Naive thymus-derived CD4-positive, alpha-beta T cell (primary cell): ENCODE measurements at regions of chr2 and their contacts with region 1.

Region 1: GRCh38 chr2:195649629-195650190 is 7.3 kb upstream of the SLC39A10 start:
- DNase-seq: no peak
- ATAC-seq: no peak
- H3K4me3 ChIP-seq: no peak overlapping the region
- H3K4me3 Mint-ChIP-seq: peak overlapping the region in 4 of 10 donors; percentile 8 to 56 (median 27)
- H3K27ac ChIP-seq: no peak overlapping the region
- H3K27ac Mint-ChIP-seq: peak overlapping the region in 5 of 9 donors; percentile 10 to 90 (median 53)
- H3K4me1 ChIP-seq: no peaks in the 10 kb centered on the region
- H3K4me1 Mint-ChIP-seq: peaks cover 13 to 35% (median 18%) of the 10 kb centered on the region in 7 donors
- H3K27me3 ChIP-seq: no peaks in the 10 kb centered on the region
- H3K27me3 Mint-ChIP-seq: no peaks in the 10 kb centered on the region

Region 2: DNA sequence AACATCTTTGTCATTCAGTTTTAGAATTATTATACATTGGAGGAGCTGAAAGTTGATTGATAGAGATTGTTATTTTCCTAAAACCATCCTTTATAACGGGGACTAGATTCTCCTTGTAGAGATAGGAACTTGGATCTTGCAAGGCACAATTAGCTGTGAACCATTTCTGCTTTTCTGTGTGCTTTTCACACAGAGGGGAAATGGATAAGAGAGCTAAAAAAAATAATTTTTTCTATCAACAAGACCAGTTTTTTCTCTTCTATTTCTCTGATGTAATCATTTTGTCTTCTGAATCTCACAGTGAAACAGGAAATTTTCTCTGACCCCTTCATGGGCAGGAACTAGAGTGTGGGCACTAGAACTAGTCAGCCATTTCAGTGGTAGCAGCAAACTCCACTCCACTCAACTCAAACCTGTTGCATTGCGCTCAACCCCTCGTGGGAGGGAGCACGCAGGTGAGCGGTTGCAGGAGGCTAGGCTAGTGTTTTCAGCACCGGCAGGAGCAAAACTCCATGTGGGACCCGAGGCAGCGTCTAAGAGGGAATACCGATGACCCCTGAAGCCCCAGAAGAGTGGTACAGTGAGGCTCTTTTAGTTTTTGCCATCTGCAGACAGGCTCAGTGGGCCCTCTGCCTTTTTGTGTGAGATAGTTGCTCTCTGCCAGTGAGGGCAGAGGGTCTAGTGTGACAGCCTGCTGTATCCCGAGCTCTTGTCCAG is 16.7 kb before region 1 on chr2:
- CTCF ChIA-PET with region 1: no interaction called
- POLR2A ChIA-PET with region 1: interaction called, 4 read pairs
- intact Hi-C with region 1: loop called in 1 of 2 experiments (anchors 2 kb)
- DNase-seq: no peak
- ATAC-seq: no peak
- H3K4me3 ChIP-seq: no peak overlapping the region
- H3K4me3 Mint-ChIP-seq: peak overlapping the region in 3 of 10 donors; percentile 19 to 50 (median 40)
- H3K27ac ChIP-seq: no peak overlapping the region
- H3K27ac Mint-ChIP-seq: peak overlapping the region in 3 of 9 donors; percentile 36 to 81 (median 48)
- H3K4me1 ChIP-seq: no peaks in the 10 kb centered on the region
- H3K4me1 Mint-ChIP-seq: peaks cover 1 to 28% (median 17%) of the 10 kb centered on the region in 7 donors
- H3K27me3 ChIP-seq: no peaks in the 10 kb centered on the region
- H3K27me3 Mint-ChIP-seq: no peaks in the 10 kb centered on the region

Region 3: GRCh38 chr2:195672668-195673067 is 23.0 kb after region 1 on chr2:
- CTCF ChIA-PET with region 1: no interaction called
- POLR2A ChIA-PET with region 1: no interaction called
- intact Hi-C with region 1: no loop called
- DNase-seq: no peak
- ATAC-seq: no peak
- H3K4me3 ChIP-seq: no peak overlapping the region
- H3K4me3 Mint-ChIP-seq: no peak overlapping the region
- H3K27ac ChIP-seq: no peak overlapping the region
- H3K27ac Mint-ChIP-seq: no peak overlapping the region
- H3K4me1 ChIP-seq: peaks cover 0 to 12% of the 10 kb centered on the region in 2 donors
- H3K4me1 Mint-ChIP-seq: peaks cover 12 to 79% (median 56%) of the 10 kb centered on the region in 7 donors
- H3K27me3 ChIP-seq: no peaks in the 10 kb centered on the region
- H3K27me3 Mint-ChIP-seq: no peaks in the 10 kb centered on the region

Region 4: DNA sequence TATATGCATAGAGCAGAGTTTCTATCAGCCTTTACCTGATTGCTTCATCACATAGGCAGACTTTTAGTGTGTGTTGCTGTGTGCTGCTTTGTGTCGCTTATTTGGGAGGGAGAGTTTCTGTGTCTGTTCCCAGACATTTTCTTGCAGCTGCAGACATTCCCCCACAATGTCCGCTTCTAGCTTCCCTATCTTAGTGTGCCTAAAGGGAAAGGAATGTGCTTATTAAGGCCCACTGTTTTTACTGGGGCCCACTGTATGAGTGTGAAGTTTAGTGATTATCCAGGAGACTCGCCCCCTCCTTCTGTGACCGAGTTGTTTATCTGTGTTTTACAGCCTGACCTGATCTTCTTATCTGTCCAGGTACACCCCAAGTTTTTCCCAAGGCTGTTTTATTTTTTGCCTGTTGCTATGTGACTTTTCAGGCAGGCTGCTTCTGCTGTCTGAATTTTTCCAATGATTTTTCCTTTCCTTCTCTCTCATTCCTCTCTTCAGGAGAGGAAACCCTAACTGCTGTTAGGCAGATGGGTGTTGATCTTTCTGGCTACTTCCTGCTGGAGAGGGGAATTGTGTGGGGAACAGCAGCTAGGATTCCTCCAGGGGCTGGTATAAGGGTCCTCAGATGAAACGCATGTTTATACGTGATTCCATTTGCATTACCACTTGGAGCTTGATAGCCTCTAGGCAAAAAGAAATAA is 474.1 kb after region 1 on chr2:
- CTCF ChIA-PET with region 1: no interaction called
- POLR2A ChIA-PET with region 1: no interaction called
- intact Hi-C with region 1: no loop called
- DNase-seq: no peak
- ATAC-seq: no peak
- H3K4me3 ChIP-seq: no peak overlapping the region
- H3K4me3 Mint-ChIP-seq: no peak overlapping the region
- H3K27ac ChIP-seq: no peak overlapping the region
- H3K27ac Mint-ChIP-seq: no peak overlapping the region
- H3K4me1 ChIP-seq: no peaks in the 10 kb centered on the region
- H3K4me1 Mint-ChIP-seq: peaks cover 0 to 4% (median 0%) of the 10 kb centered on the region in 7 donors
- H3K27me3 ChIP-seq: no peaks in the 10 kb centered on the region
- H3K27me3 Mint-ChIP-seq: no peaks in the 10 kb centered on the region